CD4-positive, alpha-beta T cell (primary cell): ENCODE measurements at regions of chr13 and their contacts with region 1.

Region 1: GRCh38 chr13:20773194-20774080 is at the start of gene EEF1AKMT1:
- DNase-seq: peak; percentile 89 to 97 (median 94)
- ATAC-seq: peak; percentile 88
- H3K4me3 ChIP-seq: peak within 1 kb of the TSS; percentile 75
- H3K4me3 Mint-ChIP-seq: peak within 1 kb of the TSS; percentile 98
- H3K27ac ChIP-seq: peak within 1 kb of the TSS; percentile 90 to 92
- H3K27ac Mint-ChIP-seq: peak within 1 kb of the TSS; percentile 98
- H3K4me1 ChIP-seq: peaks cover 31% of the 10 kb centered on the region
- H3K4me1 Mint-ChIP-seq: peaks cover 40% of the 10 kb centered on the region
- H3K27me3 ChIP-seq: no peaks in the 10 kb centered on the region
- H3K27me3 Mint-ChIP-seq: no peaks in the 10 kb centered on the region
- CTCF ChIP-seq: no peak
- total RNA-seq, gene EEF1AKMT1: 1.9 to 2.5 TPM

Region 2: GRCh38 chr13:19633479-19634255 is 1139.8 kb before region 1 on chr13 and contains the start of gene MPHOSPH8:
- CTCF ChIA-PET with region 1: no interaction called
- POLR2A ChIA-PET with region 1: interaction called, 3 read pairs
- intact Hi-C with region 1: loop called in 1 of 2 experiments (anchors 10 kb)
- DNase-seq: peak; percentile 86 to 98 (median 92)
- ATAC-seq: peak; percentile 96
- H3K4me3 ChIP-seq: peak within 1 kb of the TSS; percentile 84
- H3K4me3 Mint-ChIP-seq: peak within 1 kb of the TSS; percentile 100
- H3K27ac ChIP-seq: peak within 1 kb of the TSS; percentile 76 to 79
- H3K27ac Mint-ChIP-seq: peak within 1 kb of the TSS; percentile 97
- H3K4me1 ChIP-seq: peaks cover 29% of the 10 kb centered on the region
- H3K4me1 Mint-ChIP-seq: peaks cover 38% of the 10 kb centered on the region
- H3K27me3 ChIP-seq: no peaks in the 10 kb centered on the region
- H3K27me3 Mint-ChIP-seq: no peaks in the 10 kb centered on the region
- CTCF ChIP-seq: no peak
- total RNA-seq, gene MPHOSPH8: 48.0 to 51.2 TPM

Region 3: GRCh38 chr13:19959831-19960652 is 813.4 kb before region 1 on chr13:
- CTCF ChIA-PET with region 1: no interaction called
- POLR2A ChIA-PET with region 1: interaction called, 4 read pairs
- intact Hi-C with region 1: loop called in 1 of 2 experiments (anchors 10 kb)
- DNase-seq: peak; percentile 75 to 96 (median 81)
- ATAC-seq: peak; percentile 55
- H3K4me3 ChIP-seq: peak overlapping the region; percentile 81
- H3K4me3 Mint-ChIP-seq: peak overlapping the region; percentile 98
- H3K27ac ChIP-seq: peak overlapping the region; percentile 81 to 93
- H3K27ac Mint-ChIP-seq: peak overlapping the region; percentile 99
- H3K4me1 ChIP-seq: peaks cover 30% of the 10 kb centered on the region
- H3K4me1 Mint-ChIP-seq: peaks cover 28% of the 10 kb centered on the region
- H3K27me3 ChIP-seq: no peaks in the 10 kb centered on the region
- H3K27me3 Mint-ChIP-seq: no peaks in the 10 kb centered on the region
- CTCF ChIP-seq: peak; percentile 87

Region 4: GRCh38 chr13:20258208-20258962 is 515.1 kb before region 1 on chr13:
- CTCF ChIA-PET with region 1: no interaction called
- POLR2A ChIA-PET with region 1: no interaction called
- intact Hi-C with region 1: no loop called
- DNase-seq: no peak
- ATAC-seq: no peak
- H3K4me3 ChIP-seq: no peak overlapping the region
- H3K4me3 Mint-ChIP-seq: no peak overlapping the region
- H3K27ac ChIP-seq: no peak overlapping the region
- H3K27ac Mint-ChIP-seq: no peak overlapping the region
- H3K4me1 ChIP-seq: no peaks in the 10 kb centered on the region
- H3K4me1 Mint-ChIP-seq: no peaks in the 10 kb centered on the region
- H3K27me3 ChIP-seq: no peaks in the 10 kb centered on the region
- H3K27me3 Mint-ChIP-seq: no peaks in the 10 kb centered on the region
- CTCF ChIP-seq: no peak

Region 5: DNA sequence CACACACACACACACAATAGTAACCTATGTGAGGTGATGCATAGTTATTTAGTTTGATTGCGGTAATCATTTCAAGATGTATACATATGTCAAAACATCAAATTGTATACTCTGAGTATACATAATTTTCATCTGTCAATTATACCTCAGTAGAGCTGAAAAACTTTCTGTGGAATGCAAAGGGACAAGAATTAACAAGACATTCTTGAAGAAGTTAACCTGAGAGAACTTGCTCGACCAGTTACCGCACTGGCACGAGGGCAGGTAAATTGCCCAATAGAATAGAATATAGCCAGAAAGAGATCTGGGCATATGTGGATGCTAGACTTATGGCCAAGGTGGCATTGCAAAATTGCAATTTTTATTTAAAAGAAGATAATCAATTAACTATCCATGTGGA is 499.0 kb before region 1 on chr13:
- CTCF ChIA-PET with region 1: no interaction called
- POLR2A ChIA-PET with region 1: no interaction called
- intact Hi-C with region 1: no loop called
- DNase-seq: no peak
- ATAC-seq: no peak
- H3K4me3 ChIP-seq: no peak overlapping the region
- H3K4me3 Mint-ChIP-seq: no peak overlapping the region
- H3K27ac ChIP-seq: no peak overlapping the region
- H3K27ac Mint-ChIP-seq: no peak overlapping the region
- H3K4me1 ChIP-seq: no peaks in the 10 kb centered on the region
- H3K4me1 Mint-ChIP-seq: no peaks in the 10 kb centered on the region
- H3K27me3 ChIP-seq: no peaks in the 10 kb centered on the region
- H3K27me3 Mint-ChIP-seq: peaks cover 26% of the 10 kb centered on the region
- CTCF ChIP-seq: no peak

Region 6: GRCh38 chr13:20566898-20567874 is 206.3 kb before region 1 on chr13 and contains the start of gene IFT88:
- CTCF ChIA-PET with region 1: no interaction called
- POLR2A ChIA-PET with region 1: interaction called, 3 read pairs
- intact Hi-C with region 1: loop called in 1 of 2 experiments (anchors 2 kb)
- DNase-seq: peak; percentile 57 to 87 (median 78)
- ATAC-seq: peak; percentile 87
- H3K4me3 ChIP-seq: peak within 1 kb of the TSS; percentile 69
- H3K4me3 Mint-ChIP-seq: peak within 1 kb of the TSS; percentile 96
- H3K27ac ChIP-seq: peak within 1 kb of the TSS; percentile 53 to 60
- H3K27ac Mint-ChIP-seq: peak within 1 kb of the TSS; percentile 82
- H3K4me1 ChIP-seq: peaks cover 15% of the 10 kb centered on the region
- H3K4me1 Mint-ChIP-seq: peaks cover 19% of the 10 kb centered on the region
- H3K27me3 ChIP-seq: no peaks in the 10 kb centered on the region
- H3K27me3 Mint-ChIP-seq: no peaks in the 10 kb centered on the region
- CTCF ChIP-seq: no peak
- total RNA-seq, gene IFT88: 9.0 to 9.5 TPM

Region 7: DNA sequence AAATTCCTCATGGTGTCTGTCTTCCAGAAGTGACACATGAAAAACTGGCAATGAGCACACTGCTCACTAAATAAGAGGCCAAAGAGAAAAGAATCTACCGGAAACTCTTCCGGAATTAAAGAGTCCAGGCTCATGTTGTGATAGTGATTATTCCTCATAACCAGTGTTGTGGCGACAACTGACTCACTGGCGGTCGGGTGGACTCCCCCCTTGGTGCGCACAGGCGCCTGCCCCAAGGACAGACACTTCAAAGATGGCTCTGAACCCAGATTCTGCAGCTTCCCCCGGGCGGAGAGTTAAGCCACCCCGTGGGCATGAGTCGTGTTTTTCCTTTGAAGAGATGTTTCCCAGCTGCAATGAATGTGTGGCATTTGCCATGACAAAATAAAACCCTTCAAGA is 59.7 kb before region 1 on chr13:
- CTCF ChIA-PET with region 1: no interaction called
- POLR2A ChIA-PET with region 1: no interaction called
- intact Hi-C with region 1: loop called in 1 of 2 experiments (anchors 2 kb)
- DNase-seq: no peak
- ATAC-seq: no peak
- H3K4me3 ChIP-seq: no peak overlapping the region
- H3K4me3 Mint-ChIP-seq: no peak overlapping the region
- H3K27ac ChIP-seq: no peak overlapping the region
- H3K27ac Mint-ChIP-seq: no peak overlapping the region
- H3K4me1 ChIP-seq: peaks cover 11% of the 10 kb centered on the region
- H3K4me1 Mint-ChIP-seq: peaks cover 11% of the 10 kb centered on the region
- H3K27me3 ChIP-seq: no peaks in the 10 kb centered on the region
- H3K27me3 Mint-ChIP-seq: peaks cover 9% of the 10 kb centered on the region
- CTCF ChIP-seq: no peak

Region 8: DNA sequence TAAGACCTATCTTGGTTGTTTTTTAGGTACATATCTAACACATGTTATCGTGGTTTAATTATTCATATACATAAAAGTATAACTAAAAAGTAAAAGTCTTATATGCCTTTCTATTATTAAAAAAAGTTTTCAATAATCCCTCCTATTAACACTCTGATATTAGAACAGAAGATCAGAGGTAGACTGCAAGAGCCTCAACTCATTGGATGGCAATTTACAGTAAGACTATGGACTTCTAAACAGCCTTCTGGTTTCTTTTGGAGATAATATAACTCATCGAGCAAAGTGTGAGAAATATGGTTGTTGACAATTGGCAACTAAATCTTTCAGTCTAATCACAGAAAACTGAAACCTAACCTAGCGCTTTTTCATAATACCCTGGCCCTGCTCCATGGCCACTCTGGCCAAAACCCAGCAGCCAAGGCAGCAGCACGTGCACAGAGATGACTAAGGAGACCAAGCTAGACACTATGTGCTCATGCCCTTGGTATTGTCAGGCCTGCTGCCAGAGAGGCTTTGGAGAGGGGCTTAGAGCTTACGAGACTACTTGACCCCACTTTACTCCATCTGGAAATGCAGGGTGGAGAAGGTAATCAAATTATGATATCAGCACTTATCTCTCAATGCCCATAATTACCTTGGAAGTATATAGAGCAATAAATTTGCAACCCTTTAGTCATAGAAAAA is 40.9 kb after region 1 on chr13:
- CTCF ChIA-PET with region 1: no interaction called
- POLR2A ChIA-PET with region 1: no interaction called
- intact Hi-C with region 1: no loop called
- DNase-seq: no peak
- ATAC-seq: no peak
- H3K4me3 ChIP-seq: no peak overlapping the region
- H3K4me3 Mint-ChIP-seq: no peak overlapping the region
- H3K27ac ChIP-seq: no peak overlapping the region
- H3K27ac Mint-ChIP-seq: no peak overlapping the region
- H3K4me1 ChIP-seq: no peaks in the 10 kb centered on the region
- H3K4me1 Mint-ChIP-seq: no peaks in the 10 kb centered on the region
- H3K27me3 ChIP-seq: no peaks in the 10 kb centered on the region
- H3K27me3 Mint-ChIP-seq: no peaks in the 10 kb centered on the region
- CTCF ChIP-seq: no peak

Region 9: DNA sequence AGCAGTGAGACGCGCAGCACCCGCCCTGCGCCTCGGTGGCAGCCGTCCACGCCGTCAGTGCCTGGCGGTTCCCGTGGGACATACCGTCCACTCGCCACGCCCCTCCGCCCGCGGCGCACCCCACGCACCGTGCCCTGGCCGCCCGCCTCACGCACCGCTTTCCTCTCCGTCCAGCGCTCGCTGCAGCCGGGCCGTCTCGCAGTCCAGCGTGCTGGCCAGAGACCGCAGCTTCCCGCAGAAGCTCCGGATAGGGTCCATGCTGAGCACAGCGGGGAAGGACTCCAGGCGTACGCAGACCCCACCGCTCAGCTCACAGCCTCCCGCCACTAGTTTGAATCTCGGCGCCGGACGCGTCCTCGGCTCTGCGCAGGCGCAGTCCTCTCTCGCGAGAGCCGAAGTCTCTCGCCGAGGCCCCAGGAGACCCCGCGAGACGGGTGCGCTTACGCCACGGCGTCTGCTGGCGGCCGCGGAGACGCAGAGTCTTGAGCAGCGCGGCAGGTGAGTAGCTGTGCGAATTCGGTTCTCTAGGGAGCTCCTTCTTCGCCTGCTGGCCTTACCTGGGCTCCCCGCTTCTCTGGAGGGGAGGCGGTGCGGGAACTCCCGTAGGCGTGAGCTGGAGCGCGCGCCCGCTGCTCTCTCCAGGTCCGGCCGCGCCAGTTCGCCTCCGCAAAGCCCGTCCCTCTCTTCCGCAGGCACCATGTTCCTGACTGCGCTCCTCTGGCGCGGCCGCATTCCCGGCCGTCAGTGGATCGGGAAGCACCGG is 403.0 kb after region 1 on chr13 and contains the starts of genes MRPL57 and SKA3:
- CTCF ChIA-PET with region 1: no interaction called
- POLR2A ChIA-PET with region 1: interaction called, 3 read pairs
- intact Hi-C with region 1: loop called in 1 of 2 experiments (anchors 5 kb)
- DNase-seq: peak; percentile 87 to 98 (median 92)
- ATAC-seq: peak; percentile 98
- H3K4me3 ChIP-seq: peak within 1 kb of the TSS; percentile 100
- H3K4me3 Mint-ChIP-seq: peak within 1 kb of the TSS; percentile 90
- H3K27ac ChIP-seq: peak within 1 kb of the TSS; percentile 83 to 95
- H3K27ac Mint-ChIP-seq: peak within 1 kb of the TSS; percentile 96
- H3K4me1 ChIP-seq: peaks cover 22% of the 10 kb centered on the region
- H3K4me1 Mint-ChIP-seq: peaks cover 29% of the 10 kb centered on the region
- H3K27me3 ChIP-seq: no peaks in the 10 kb centered on the region
- H3K27me3 Mint-ChIP-seq: no peaks in the 10 kb centered on the region
- CTCF ChIP-seq: no peak
- total RNA-seq, gene MRPL57: 10.0 to 10.5 TPM
- total RNA-seq, gene SKA3: 0.30 TPM in 1 of 2 experiments, not detected in the other